Vagina (tissue), 2 donors: ENCODE measurements at regions of chr12 and their contacts with region 1.

Region 1: GRCh38 chr12:63129927-63130326 is 21.1 kb downstream of the AVPR1A start:
- DNase-seq: no peak
- H3K4me3 ChIP-seq: no peak overlapping the region
- H3K27ac ChIP-seq: no peak overlapping the region
- H3K4me1 ChIP-seq: no peaks in the 10 kb centered on the region
- H3K27me3 ChIP-seq: no peaks in the 10 kb centered on the region
- CTCF ChIP-seq: no peak
- POLR2A ChIP-seq: no peak

Region 2: DNA sequence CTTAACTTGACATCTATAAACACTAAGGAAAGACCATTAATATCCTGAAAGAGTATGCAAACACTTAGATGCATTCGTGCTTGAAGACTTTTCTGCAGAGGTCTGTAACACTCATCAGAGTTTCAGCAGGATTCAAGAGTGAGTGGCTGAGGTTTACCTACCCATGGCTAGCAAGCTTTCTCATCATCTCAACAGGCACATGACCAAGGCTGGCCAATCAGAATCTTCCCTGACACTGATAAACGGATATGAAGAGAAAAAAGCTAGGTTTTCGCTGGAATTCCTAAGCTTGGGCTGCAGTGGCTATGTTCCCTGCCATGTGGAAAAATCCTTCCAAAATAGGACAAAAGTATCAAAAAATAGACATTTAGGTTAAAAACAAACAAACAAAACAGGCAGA is 1031.8 kb before region 1 on chr12:
- intact Hi-C with region 1: loop called (anchors 5 kb)
- DNase-seq: no peak
- H3K4me3 ChIP-seq: no peak overlapping the region
- H3K27ac ChIP-seq: no peak overlapping the region
- H3K4me1 ChIP-seq: no peaks in the 10 kb centered on the region
- H3K27me3 ChIP-seq: no peaks in the 10 kb centered on the region
- CTCF ChIP-seq: no peak
- POLR2A ChIP-seq: no peak